GM12878 (cell line): ENCODE measurements at regions of chr6 and their contacts with region 1.

Region 1: GRCh38 chr6:75498862-75499261 is 5.3 kb upstream of the FILIP1 start:
- DNase-seq: no peak
- ATAC-seq: no peak
- H3K4me3 ChIP-seq: no peak overlapping the region
- H3K27ac ChIP-seq: no peak overlapping the region
- H3K4me1 ChIP-seq: peaks cover 16% of the 10 kb centered on the region
- H3K27me3 ChIP-seq: no peaks in the 10 kb centered on the region
- CTCF ChIP-seq: no peak
- EP300 ChIP-seq: no peak
- POLR2A ChIP-seq: no peak
- RAD21 ChIP-seq: no peak

Region 2: DNA sequence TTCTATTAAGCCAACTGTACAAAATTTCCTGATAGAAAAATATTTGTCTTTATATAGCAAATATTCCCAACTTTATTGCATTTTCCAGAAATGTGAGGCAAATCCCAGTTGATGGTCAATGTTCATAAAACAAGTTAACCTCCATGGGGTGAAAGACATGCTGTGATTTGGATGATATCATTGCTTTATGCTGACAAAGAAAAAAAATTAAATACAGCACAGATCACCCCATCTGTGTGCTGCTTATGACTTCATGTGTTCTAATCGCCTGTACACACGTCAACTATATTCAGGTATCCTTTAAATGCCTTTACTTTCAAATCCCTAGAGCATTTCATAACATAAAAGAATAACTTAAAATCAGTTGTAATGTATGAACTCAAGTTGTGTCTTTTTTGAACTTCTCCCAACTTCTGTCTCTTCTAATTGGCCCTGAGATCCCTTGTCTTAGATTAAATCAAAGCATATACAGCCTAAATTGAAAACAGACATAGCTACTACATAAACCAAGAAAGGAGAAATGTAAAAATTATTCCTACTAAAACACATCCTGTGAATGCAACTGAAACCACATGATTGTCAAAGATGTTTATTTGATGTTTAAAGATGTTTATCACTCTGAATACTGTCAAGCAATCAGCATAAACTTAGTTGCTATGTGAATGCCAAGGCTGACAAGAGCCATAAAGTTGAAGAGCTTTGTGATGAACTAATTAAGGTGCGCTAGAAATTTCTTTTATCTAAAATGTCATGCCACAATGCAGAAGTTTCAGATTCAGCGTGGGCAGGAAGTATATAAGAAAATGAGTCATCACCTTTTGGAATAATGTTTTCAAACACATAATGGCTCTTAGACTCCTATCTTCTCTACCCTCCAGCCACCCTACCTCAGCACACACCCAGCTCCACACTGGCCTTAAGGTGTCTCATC is 74.0 kb before region 1 on chr6:
- CTCF ChIA-PET with region 1: no interaction called
- POLR2A ChIA-PET with region 1: no interaction called
- RAD21 ChIA-PET with region 1: no interaction called
- SMC1A ChIA-PET with region 1: interaction called, 5 read pairs
- in situ Hi-C with region 1: no loop called
- intact Hi-C with region 1: loop called (anchors 5 kb)
- DNase-seq: no peak
- ATAC-seq: peak; percentile 45
- H3K4me3 ChIP-seq: no peak overlapping the region
- H3K27ac ChIP-seq: no peak overlapping the region
- H3K4me1 ChIP-seq: peaks cover 6% of the 10 kb centered on the region
- H3K27me3 ChIP-seq: no peaks in the 10 kb centered on the region
- CTCF ChIP-seq: no peak
- EP300 ChIP-seq: no peak
- POLR2A ChIP-seq: no peak
- RAD21 ChIP-seq: no peak